Activated CD4-positive, alpha-beta T cell treated with anti-CD3 and anti-CD28 coated beads, Interleukin-2, amount 10 ng/mL, durations not matched to agents 24 days and 14 days (primary cell): ENCODE measurements at regions of chr3 and their contacts with region 1.

Region 1: DNA sequence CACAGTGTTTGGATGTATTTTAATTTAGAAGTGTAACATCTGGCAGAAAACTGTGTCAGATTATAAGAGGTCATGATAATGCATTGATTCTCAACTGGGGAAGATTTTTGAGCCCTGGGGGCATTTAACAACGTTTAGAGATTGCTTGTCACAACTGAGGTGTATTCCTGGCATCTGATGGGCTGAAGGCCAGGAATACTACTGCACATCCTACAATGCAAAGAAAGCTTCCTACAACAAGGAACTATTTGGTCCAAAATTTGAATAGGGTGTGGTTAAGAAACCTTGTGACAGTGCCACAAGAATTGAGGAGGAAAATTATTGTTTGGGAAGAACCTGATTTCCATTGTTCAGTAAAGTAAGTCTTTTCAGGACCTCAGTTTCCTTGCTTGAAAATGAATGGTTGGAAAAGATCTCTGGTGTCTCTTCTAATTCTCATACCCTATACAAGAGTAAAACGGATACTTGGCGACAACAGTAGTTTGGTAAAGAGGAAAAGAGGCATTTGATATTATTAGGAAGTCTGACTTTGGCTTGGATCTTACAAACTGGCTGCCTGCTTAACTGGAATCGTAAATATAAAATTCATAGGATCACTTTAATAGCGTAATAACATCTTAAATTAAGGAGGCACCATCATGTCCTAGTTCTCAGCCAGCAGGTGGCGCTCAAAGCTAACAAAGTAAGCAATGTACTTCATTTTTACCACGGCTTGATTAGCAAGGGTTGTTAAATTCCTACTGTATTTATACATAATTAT is 4.3 kb downstream of the DAZL start:
- DNase-seq: peak; percentile 91
- H3K4me3 Mint-ChIP-seq: no peak overlapping the region
- H3K27ac Mint-ChIP-seq: no peak overlapping the region
- H3K4me1 Mint-ChIP-seq: peaks cover 19% of the 10 kb centered on the region
- H3K27me3 Mint-ChIP-seq: peaks cover 38% of the 10 kb centered on the region

Region 2: DNA sequence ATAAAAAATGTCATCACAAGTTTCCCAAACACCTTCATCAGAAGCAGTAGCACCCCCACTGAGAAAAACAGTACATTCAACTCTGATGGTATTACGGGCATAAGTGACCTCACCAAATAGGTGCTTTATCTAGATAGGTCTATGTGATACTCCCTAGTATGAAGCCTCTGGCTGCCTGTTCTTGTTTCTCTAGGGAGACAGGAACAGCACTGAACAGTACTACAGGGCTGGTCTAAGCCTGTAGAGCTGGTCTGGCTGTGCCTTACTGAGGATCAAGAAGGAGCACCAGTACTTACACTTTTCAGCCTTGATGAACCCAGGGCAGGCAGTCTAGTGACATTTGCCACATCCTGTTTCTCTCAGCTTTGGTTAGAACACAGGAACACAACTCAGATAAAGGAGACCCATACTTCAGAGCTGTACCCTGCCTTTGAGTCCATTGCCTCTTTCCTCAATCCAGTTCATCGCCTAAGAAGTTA is 300.0 kb before region 1 on chr3:
- intact Hi-C with region 1: loop called (anchors 5 kb)
- DNase-seq: peak; percentile 90
- H3K4me3 Mint-ChIP-seq: peak overlapping the region; percentile 86
- H3K27ac Mint-ChIP-seq: peak overlapping the region; percentile 97
- H3K4me1 Mint-ChIP-seq: peaks cover 83% of the 10 kb centered on the region
- H3K27me3 Mint-ChIP-seq: no peaks in the 10 kb centered on the region

Region 3: GRCh38 chr3:16828815-16829214 is 227.9 kb after region 1 on chr3:
- intact Hi-C with region 1: loop called (anchors 5 kb)
- DNase-seq: peak; percentile 84
- H3K4me3 Mint-ChIP-seq: no peak overlapping the region
- H3K27ac Mint-ChIP-seq: no peak overlapping the region
- H3K4me1 Mint-ChIP-seq: peaks cover 16% of the 10 kb centered on the region
- H3K27me3 Mint-ChIP-seq: peaks cover 9% of the 10 kb centered on the region

Region 4: GRCh38 chr3:16906682-16907081 is 305.7 kb after region 1 on chr3:
- intact Hi-C with region 1: loop called (anchors 5 kb)
- DNase-seq: peak; percentile 75
- H3K4me3 Mint-ChIP-seq: peak overlapping the region; percentile 38
- H3K27ac Mint-ChIP-seq: no peak overlapping the region
- H3K4me1 Mint-ChIP-seq: peaks cover 61% of the 10 kb centered on the region
- H3K27me3 Mint-ChIP-seq: no peaks in the 10 kb centered on the region

Region 5: DNA sequence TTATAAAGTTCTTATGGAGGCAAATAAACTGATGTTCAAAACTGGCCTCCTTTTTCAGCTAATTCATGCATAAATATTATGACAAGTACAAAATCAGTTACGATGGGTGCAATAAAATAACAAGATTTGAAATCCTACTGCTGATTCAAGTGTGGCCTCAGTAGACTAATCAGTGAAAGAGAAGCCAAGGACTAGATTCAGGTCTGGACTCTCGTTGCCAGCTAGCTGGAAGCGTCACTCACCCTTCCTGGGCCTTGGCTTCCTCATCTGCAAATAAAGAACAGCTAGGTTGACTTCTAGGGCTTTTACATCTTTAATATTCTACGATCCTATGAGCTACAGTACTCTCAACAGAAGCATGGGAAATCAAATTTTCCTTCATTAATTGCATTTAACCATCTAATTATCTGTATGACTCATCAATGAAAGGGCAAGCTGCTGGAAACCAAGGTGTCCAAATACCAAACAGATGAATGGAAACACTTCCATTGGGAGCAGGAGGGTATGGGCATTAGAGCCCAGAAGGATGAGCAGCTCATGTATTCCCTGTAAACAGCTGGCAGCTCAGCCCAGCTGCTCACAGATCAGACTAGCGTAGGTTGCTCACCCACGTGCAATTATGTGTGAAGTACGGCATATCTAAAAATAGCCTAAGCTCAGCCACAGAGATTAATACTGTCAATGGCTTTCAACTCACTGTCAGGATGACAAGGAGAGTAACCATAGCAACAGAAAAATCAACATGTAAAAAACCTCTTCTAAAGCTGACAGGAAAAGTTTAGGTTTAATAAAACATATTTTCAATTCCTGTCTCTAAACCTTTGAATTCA is 578.6 kb after region 1 on chr3:
- intact Hi-C with region 1: loop called (anchors 2 kb)
- DNase-seq: peak; percentile 50
- H3K4me3 Mint-ChIP-seq: no peak overlapping the region
- H3K27ac Mint-ChIP-seq: no peak overlapping the region
- H3K4me1 Mint-ChIP-seq: peaks cover 27% of the 10 kb centered on the region
- H3K27me3 Mint-ChIP-seq: peaks cover 1% of the 10 kb centered on the region

Region 6: DNA sequence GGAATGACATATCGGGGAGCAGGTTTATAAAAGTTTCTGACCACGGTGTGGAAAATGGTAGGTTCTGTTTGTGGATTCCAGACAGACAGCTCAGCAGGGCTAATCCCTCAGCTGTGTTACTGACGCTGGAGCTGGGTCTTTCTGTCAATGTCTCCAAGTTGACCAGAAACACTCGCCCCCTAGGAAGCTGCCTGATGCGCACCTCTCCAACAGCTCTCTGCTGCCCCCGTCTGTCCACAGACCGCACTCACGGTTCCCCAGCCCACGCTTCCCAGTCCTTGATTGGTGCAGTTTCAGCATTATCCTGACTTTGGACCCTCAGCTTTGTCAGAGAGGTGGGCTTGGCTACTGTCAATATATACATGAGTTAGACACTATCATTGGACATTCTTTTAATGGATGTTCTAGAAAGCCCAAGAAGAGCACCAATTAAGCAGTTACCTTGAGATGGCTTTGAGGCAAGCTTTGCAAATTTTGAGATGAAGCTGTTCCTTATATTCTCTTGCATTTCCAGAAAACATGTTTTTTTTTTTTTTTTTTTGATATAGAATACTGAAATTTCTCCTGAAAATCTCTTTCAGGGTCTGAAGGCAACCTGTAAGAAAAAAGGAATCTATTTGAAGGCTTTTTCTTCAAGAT is 1240.3 kb after region 1 on chr3:
- intact Hi-C with region 1: loop called (anchors 5 kb)
- DNase-seq: peak; percentile 92
- H3K4me3 Mint-ChIP-seq: no peak overlapping the region
- H3K27ac Mint-ChIP-seq: no peak overlapping the region
- H3K4me1 Mint-ChIP-seq: no peaks in the 10 kb centered on the region
- H3K27me3 Mint-ChIP-seq: peaks cover 11% of the 10 kb centered on the region